ENCODE measurements at regions of chr12 and their contacts with region 1.

Region 1: DNA sequence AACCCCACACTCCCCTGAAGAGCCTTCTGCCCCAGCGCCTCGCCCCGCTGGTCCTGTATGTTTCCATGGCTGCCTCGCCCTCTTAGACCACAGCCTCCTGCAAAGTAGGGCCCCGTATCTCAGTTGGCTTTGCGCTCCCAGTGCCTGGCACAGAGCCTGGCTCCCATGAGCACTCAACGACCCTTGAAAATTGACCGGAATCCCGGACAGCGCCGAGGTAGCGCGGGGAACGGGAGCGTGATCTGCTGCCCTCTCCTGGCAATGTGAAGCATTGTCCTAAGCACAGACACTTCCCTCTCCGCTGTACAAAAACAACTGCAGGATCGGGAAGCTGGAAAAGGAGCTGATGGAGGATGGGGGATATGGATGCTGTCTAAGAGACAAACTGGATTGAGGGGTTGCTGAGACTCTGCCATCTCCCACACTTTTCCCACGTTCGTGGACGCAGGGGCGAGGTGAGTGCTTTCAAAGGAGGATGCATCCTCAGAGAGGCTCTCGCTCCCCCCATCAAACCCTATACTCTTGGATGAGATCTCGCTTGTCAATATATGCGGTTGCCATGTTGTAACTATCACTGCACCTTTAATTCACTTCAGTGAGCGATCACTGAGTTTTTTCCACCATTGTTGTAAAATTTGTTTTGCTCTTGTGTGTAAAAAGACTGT is 10.7 kb upstream of the FKBP4 start:
- DNase-seq: peak; percentile 51
- H3K27ac ChIP-seq: no peak overlapping the region
- CTCF ChIP-seq: peak; percentile 78

Region 2: GRCh38 chr12:2682296-2683251 is 101.5 kb before region 1 on chr12:
- CTCF ChIA-PET with region 1: interaction called, 13 read pairs
- POLR2A ChIA-PET with region 1: no interaction called
- DNase-seq: peak; percentile 24
- H3K27ac ChIP-seq: no peak overlapping the region
- CTCF ChIP-seq: no peak

Region 3: DNA sequence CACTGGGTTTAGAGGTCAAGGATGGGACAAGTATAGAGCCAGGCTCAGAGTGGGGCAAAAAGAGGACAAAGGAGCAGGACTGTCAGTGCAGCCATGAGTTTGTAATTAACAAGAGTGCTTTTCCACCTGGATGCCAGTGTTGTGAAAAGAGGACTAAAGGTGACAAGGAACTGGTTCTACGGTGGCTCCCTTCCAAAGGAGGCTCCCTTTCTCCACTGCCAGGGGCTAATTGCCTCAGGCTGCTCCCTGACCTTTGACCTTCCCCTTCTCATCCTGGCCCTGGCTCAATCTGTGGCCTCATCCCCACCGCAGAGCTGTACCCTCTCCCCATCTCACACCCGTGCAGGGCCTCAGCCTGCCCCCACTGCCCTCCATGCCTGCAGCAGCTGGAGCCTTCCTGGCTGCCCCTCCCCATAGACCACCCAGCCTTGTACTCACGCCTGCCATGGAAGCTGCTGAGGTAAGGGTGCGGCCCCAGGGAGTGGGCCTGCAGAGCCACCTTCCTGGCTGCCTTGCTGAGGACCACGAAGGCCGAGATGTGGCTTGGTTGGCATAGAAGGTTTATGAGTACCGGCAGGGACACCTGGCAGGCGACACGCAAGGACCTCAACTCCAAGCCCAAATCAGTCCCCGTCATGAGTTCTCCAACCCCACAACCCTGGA is 14.1 kb before region 1 on chr12:
- CTCF ChIA-PET with region 1: no interaction called
- POLR2A ChIA-PET with region 1: no interaction called
- DNase-seq: no peak
- H3K27ac ChIP-seq: no peak overlapping the region
- CTCF ChIP-seq: no peak

Region 4: GRCh38 chr12:2794736-2795289 is 10.7 kb after region 1 on chr12 and contains the start of gene FKBP4:
- CTCF ChIA-PET with region 1: interaction called, 12 read pairs
- POLR2A ChIA-PET with region 1: no interaction called
- DNase-seq: peak; percentile 94
- H3K27ac ChIP-seq: peak within 1 kb of the TSS; percentile 67
- CTCF ChIP-seq: no peak